ENCODE measurements at regions of chr16 and their contacts with region 1.

Region 1: GRCh38 chr16:21952793-21953540 is at the start of gene UQCRC2:
- DNase-seq: peak; percentile 85 to 93
- ATAC-seq: peak; percentile 95 to 98 (median 97)
- H3K4me3 ChIP-seq: peak within 1 kb of the TSS; percentile 78 to 98 (median 88)
- H3K27ac ChIP-seq: peak within 1 kb of the TSS; percentile 86 to 99 (median 96)
- H3K4me1 ChIP-seq: peaks cover 3 to 70% (median 50%) of the 10 kb centered on the region in 9 donors
- H3K27me3 ChIP-seq: no peaks in the 10 kb centered on the region
- CTCF ChIP-seq: no peak
- total RNA-seq, gene UQCRC2: 648 to 1,183 (median 997) TPM

Region 2: GRCh38 chr16:21646721-21647561 is 306.0 kb before region 1 on chr16:
- intact Hi-C with region 1: loop called in 1 of 10 experiments (anchors 5 kb)
- DNase-seq: no peak
- ATAC-seq: peak in 1 of 8 donors; percentile 32
- H3K4me3 ChIP-seq: no peak overlapping the region
- H3K27ac ChIP-seq: peak overlapping the region in 8 of 10 donors; percentile 46 to 86 (median 69)
- H3K4me1 ChIP-seq: peaks cover 4 to 78% (median 27%) of the 10 kb centered on the region in 9 donors
- H3K27me3 ChIP-seq: no peaks in the 10 kb centered on the region
- CTCF ChIP-seq: no peak

Region 3: DNA sequence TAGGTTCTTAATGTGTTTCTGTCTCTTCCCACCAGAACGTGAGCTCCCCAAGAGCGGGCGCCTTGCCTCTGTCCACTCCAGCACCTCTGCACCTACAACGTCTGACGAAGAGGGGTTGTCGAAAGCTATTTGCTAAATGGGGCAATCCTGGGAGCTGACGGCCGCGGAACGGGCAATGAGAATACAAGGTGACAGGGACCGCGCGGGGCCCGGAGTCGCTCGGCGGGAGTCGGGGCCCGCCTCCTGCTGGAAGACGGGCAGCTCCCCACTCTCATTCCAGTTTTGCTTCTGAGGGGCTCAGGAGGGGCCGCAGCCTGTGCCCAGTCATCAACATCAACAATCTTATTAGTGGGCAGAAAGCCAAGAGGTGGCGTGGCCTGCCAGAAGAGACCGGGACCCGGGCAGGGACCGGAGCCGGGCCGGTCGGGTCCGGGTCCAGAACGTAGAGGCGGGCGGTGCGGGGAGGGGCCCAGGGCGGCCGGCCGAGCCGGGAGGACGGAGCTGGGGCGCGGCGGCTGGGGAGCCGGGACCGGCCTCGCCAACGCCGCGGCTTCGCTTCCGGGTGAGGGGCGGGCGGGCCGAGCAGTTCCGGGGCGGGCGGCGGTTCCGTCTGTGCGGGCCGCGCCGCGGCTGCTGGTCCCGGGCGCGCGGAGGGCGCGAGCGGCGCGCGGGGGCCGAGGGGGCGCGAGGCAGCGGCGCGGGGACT is 54.7 kb after region 1 on chr16 and contains the start of gene MOSMO:
- intact Hi-C with region 1: loop called in 1 of 10 experiments (anchors 10 kb)
- DNase-seq: peak; percentile 74 to 83
- ATAC-seq: peak; percentile 85 to 97 (median 94)
- H3K4me3 ChIP-seq: peak within 1 kb of the TSS; percentile 58 to 100 (median 96)
- H3K27ac ChIP-seq: peak within 1 kb of the TSS; percentile 33 to 97 (median 90)
- H3K4me1 ChIP-seq: peaks cover 0 to 44% (median 32%) of the 10 kb centered on the region in 9 donors
- H3K27me3 ChIP-seq: no peaks in the 10 kb centered on the region
- CTCF ChIP-seq: peak in 3 of 9 donors; percentile 8 to 31 (median 27)
- total RNA-seq, gene MOSMO: 9.8 to 13.0 (median 11.3) TPM

Region 4: GRCh38 chr16:22054847-22055590 is 102.1 kb after region 1 on chr16:
- intact Hi-C with region 1: no loop called
- DNase-seq: no peak
- ATAC-seq: no peak
- H3K4me3 ChIP-seq: no peak overlapping the region
- H3K27ac ChIP-seq: no peak overlapping the region
- H3K4me1 ChIP-seq: peaks cover 0 to 9% (median 0%) of the 10 kb centered on the region in 9 donors
- H3K27me3 ChIP-seq: no peaks in the 10 kb centered on the region
- CTCF ChIP-seq: no peak

Region 5: GRCh38 chr16:22077700-22078313 is 124.8 kb after region 1 on chr16:
- intact Hi-C with region 1: loop called in 2 of 10 experiments (anchors 5 kb)
- DNase-seq: peak; percentile 37 to 67
- ATAC-seq: peak in 6 of 8 donors; percentile 38 to 70 (median 54)
- H3K4me3 ChIP-seq: no peak overlapping the region
- H3K27ac ChIP-seq: no peak overlapping the region
- H3K4me1 ChIP-seq: peaks cover 0 to 12% (median 3%) of the 10 kb centered on the region in 9 donors
- H3K27me3 ChIP-seq: no peaks in the 10 kb centered on the region
- CTCF ChIP-seq: peak; percentile 76 to 91 (median 83)

Region 6: GRCh38 chr16:22183901-22184614 is 231.1 kb after region 1 on chr16:
- intact Hi-C with region 1: loop called in 7 of 10 experiments (anchors 2 to 10 kb)
- DNase-seq: no peak
- ATAC-seq: no peak
- H3K4me3 ChIP-seq: no peak overlapping the region
- H3K27ac ChIP-seq: no peak overlapping the region
- H3K4me1 ChIP-seq: peaks cover under 1 to 11% (median 9%) of the 10 kb centered on the region in 9 donors
- H3K27me3 ChIP-seq: no peaks in the 10 kb centered on the region
- CTCF ChIP-seq: peak in 2 of 9 donors; percentile 6 to 13